ENCODE measurements at regions of chr1 and their contacts with region 1.

Region 1: GRCh38 chr1:100423832-100424337 is 71.6 kb downstream of the CDC14A start:
- DNase-seq: no peak
- H3K27ac ChIP-seq: no peak overlapping the region
- CTCF ChIP-seq: no peak

Region 2: DNA sequence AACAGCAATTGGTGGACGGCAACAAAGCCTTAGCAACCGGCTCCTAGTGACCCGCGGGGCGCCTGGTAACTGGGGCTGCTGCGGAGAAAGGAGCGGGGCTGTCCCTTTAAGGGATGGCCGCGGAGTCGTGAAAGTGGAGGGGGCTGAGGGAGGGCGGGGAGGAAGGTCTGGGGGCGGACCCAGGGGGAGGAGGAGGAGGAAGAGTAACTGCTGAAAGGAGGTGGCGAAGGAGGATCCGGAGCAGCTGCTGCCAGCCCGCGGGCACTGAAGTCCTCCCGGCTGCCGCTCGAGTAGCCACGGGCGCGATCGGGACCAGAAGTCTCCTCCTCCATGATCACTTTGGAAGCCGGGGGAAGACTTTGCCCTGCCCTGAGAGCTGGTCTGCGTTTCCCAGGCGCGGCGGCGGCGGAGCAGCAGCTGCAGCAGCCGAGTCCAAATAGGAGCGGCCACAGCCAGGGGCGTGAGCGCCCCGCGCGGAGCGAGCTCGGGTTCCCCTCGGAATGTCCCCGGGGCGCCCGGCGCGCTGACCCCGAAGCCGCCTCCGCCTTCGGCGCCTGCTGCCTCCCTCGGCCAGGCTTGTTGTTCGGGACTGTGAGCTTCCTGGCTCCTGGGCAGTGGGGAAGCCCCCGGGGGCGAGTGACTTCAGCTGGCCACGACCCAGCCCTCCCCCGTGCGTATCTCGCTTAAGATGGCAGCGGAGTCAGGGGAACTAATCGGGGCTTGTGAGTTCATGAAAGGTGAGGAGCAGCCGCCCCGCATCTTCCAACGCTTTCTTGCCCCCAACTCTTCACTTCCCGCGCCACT is 71.4 kb before region 1 on chr1 and contains the start of gene CDC14A:
- CTCF ChIA-PET with region 1: no interaction called
- POLR2A ChIA-PET with region 1: interaction called, 11 read pairs
- DNase-seq: peak; percentile 93
- H3K27ac ChIP-seq: peak within 1 kb of the TSS; percentile 93
- CTCF ChIP-seq: no peak

Region 3: GRCh38 chr1:100440075-100440809 is 16.4 kb after region 1 on chr1:
- CTCF ChIA-PET with region 1: no interaction called
- POLR2A ChIA-PET with region 1: no interaction called
- DNase-seq: no peak
- H3K27ac ChIP-seq: no peak overlapping the region
- CTCF ChIP-seq: no peak